Heart right ventricle (tissue), 16 donors: ENCODE measurements at regions of chr12 and their contacts with region 1.

Region 1: DNA sequence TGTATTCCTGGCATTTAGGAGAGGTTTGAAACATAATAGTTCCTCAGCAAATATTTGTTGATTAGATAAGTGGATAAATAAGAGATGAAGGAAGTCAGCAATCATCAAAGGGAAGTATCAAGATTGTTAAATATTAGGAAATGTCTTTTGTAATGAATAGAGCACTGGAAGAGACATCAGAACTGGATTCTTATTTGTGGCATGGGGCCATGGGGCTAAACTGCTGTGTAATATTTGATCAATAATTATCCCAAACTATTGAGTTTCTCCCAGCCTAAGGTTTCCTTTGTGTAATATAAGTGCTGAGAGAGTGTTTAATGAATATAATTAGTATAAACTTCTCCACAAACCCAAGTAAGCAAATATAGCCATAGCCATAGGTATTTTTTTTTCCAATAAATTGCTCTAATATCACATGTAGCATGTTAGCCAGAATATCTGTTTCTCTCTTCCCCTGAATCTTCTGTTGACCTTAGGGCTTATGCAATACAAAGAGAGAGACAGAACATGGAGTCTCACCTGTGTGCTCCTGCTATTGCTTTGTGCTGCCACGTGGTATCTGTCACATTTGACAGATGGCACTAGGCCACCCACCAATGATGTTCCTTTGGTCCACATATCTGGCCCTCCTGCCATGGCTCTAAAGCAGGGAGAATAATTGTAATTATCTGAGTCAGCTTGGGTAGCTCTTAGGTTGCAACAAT is 658.7 kb downstream of the SOX5 start:
- DNase-seq: no peak
- ATAC-seq: no peak
- H3K4me3 ChIP-seq: no peak overlapping the region
- H3K27ac ChIP-seq: no peak overlapping the region
- H3K4me1 ChIP-seq: no peaks in the 10 kb centered on the region
- H3K27me3 ChIP-seq: no peaks in the 10 kb centered on the region
- CTCF ChIP-seq: no peak

Region 2: DNA sequence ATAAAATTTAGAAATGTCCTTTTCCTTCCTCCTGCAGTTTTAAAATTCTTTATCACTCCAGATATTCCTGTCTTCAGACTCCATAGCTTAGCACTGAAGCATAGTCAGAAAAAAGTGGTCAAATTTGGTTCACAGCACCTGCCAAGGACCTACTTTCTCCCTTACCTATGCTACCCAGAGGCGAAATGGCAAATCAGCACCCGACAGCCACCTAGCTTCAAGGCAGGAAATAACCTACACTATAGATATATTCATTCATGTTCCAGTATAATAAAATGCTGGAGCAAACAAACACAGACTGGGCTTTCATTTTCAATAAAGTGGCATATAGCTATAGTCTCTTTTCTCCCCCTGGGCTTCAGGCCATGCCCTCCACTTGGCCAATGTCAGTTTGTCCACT is 49.0 kb after region 1 on chr12:
- intact Hi-C with region 1: loop called in 1 of 10 experiments (anchors 1 kb)
- DNase-seq: no peak
- ATAC-seq: no peak
- H3K4me3 ChIP-seq: no peak overlapping the region
- H3K27ac ChIP-seq: no peak overlapping the region
- H3K4me1 ChIP-seq: no peaks in the 10 kb centered on the region
- H3K27me3 ChIP-seq: no peaks in the 10 kb centered on the region
- CTCF ChIP-seq: no peak

Region 3: DNA sequence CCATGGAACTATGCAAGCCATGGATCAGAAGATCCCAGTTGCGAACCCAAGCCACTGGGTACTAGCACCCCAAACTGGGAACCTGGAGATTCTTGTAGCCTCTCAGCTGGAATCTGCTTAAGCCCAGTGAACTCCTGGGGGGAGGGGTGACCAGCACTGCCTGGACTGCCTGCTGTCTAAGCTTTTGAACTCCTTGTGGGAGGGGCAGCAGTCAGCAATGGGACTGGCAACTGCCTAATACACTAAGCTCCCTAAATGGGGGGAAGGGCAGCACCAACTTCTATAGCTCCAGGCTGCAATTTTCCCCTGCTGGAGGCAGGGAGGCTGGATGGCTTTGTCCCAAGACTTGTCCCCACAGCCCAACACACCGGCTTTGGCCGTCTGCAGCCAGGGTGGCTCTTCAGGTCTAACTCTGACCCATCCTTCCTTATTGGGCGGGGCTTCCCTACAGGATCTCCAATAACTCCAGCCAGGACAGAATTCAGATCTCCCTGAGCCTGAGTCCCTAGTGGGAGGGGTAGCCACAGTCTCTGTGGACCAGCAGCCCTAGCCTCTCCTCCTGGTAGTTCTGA is 173.5 kb after region 1 on chr12:
- intact Hi-C with region 1: no loop called
- DNase-seq: no peak
- ATAC-seq: no peak
- H3K4me3 ChIP-seq: no peak overlapping the region
- H3K27ac ChIP-seq: no peak overlapping the region
- H3K4me1 ChIP-seq: no peaks in the 10 kb centered on the region
- H3K27me3 ChIP-seq: no peaks in the 10 kb centered on the region
- CTCF ChIP-seq: no peak